ENCODE measurements at regions of chr10 and their contacts with region 1.

Region 1: DNA sequence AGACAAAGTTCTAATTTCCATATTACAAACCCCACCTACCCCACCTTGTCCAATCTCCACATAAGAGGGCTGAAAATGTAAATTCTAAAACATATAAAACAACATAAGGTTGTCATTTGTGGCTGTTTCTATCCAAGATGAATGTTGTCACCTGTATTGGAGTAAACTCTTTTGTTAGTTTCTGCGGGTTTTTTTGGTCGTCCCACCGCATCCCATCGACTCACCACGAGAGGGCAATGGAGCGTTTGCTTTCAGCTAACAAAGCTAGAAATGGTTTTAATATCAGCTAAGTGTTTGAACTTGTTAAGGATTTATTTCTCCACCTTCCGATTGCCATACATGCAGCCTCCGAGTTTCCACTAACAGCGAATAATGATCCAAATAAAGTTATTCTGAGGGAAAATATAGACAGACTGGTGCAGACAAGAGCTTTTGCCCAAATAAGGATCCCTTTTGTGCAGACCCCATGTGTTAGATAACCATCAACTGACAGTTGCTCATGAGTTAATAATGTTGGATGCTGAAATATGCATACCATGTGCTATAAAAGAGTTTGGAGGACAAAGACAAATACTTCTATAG is 137.2 kb downstream of the ARID5B start:
- DNase-seq: peak; percentile 81
- H3K4me3 Mint-ChIP-seq: peak overlapping the region; percentile 7
- H3K27ac Mint-ChIP-seq: peak overlapping the region; percentile 56
- H3K4me1 Mint-ChIP-seq: peaks cover 60% of the 10 kb centered on the region
- H3K27me3 Mint-ChIP-seq: no peaks in the 10 kb centered on the region
- CTCF ChIP-seq: peak; percentile 76

Region 2: GRCh38 chr10:61896854-61897661 is 141.6 kb before region 1 on chr10:
- CTCF ChIA-PET with region 1: interaction called, 15 read pairs
- intact Hi-C with region 1: loop called (anchors 1 kb)
- DNase-seq: peak; percentile 71
- H3K4me3 Mint-ChIP-seq: peak overlapping the region; percentile 42
- H3K27ac Mint-ChIP-seq: no peak overlapping the region
- H3K4me1 Mint-ChIP-seq: peaks cover 37% of the 10 kb centered on the region
- H3K27me3 Mint-ChIP-seq: no peaks in the 10 kb centered on the region
- CTCF ChIP-seq: peak; percentile 75

Region 3: DNA sequence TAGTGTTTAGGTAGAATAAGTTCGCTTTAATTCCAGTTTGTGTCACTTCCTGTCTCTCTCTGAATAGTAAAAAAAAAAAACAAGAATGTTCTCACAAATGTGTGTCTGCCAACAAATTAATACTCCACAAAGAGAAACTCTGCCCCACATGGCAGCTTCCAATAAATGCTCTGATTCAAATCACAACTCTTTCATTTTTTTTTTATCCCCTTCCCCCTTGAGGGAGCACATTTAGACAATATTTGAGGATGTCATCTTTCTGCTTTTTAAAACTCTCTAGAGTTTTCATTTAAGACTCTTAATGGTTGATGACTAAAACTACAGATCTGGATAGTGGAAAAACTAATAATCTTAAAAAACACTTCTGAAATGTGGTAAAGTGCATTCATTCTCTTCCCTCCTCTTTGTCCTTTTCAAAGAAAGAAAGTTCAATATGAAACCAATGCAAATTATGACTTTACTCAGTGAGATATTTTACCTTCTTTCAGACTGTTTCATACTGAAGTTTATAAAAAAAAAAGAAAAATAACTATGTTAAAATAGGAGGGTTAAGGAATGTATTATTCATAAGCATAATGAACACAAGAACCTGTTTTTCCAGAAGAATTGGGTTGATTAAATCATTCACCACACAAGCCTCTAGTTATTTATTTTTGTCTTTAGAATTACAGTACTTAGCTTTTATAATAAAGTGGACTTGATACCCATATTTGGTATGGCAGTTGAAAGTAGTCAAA is 94.9 kb before region 1 on chr10:
- CTCF ChIA-PET with region 1: interaction called, 6 read pairs
- intact Hi-C with region 1: loop called (anchors 2 kb)
- DNase-seq: peak; percentile 23
- H3K4me3 Mint-ChIP-seq: peak overlapping the region; percentile 50
- H3K27ac Mint-ChIP-seq: peak overlapping the region; percentile 94
- H3K4me1 Mint-ChIP-seq: peaks cover 51% of the 10 kb centered on the region
- H3K27me3 Mint-ChIP-seq: no peaks in the 10 kb centered on the region
- CTCF ChIP-seq: no peak

Region 4: GRCh38 chr10:62082729-62083411 is 44.2 kb after region 1 on chr10:
- CTCF ChIA-PET with region 1: interaction called, 10 read pairs
- intact Hi-C with region 1: no loop called
- DNase-seq: peak; percentile 21
- H3K4me3 Mint-ChIP-seq: peak overlapping the region; percentile 27
- H3K27ac Mint-ChIP-seq: peak overlapping the region; percentile 89
- H3K4me1 Mint-ChIP-seq: peaks cover 47% of the 10 kb centered on the region
- H3K27me3 Mint-ChIP-seq: no peaks in the 10 kb centered on the region
- CTCF ChIP-seq: no peak

Region 5: GRCh38 chr10:62244780-62245467 is 206.2 kb after region 1 on chr10:
- CTCF ChIA-PET with region 1: interaction called, 71 read pairs
- intact Hi-C with region 1: loop called (anchors 1 kb)
- DNase-seq: peak; percentile 51
- H3K4me3 Mint-ChIP-seq: no peak overlapping the region
- H3K27ac Mint-ChIP-seq: peak overlapping the region; percentile 9
- H3K4me1 Mint-ChIP-seq: peaks cover 19% of the 10 kb centered on the region
- H3K27me3 Mint-ChIP-seq: no peaks in the 10 kb centered on the region
- CTCF ChIP-seq: peak; percentile 77